Psoas muscle (tissue), 8 donors: ENCODE measurements at regions of chrX and their contacts with region 1.

Region 1: DNA sequence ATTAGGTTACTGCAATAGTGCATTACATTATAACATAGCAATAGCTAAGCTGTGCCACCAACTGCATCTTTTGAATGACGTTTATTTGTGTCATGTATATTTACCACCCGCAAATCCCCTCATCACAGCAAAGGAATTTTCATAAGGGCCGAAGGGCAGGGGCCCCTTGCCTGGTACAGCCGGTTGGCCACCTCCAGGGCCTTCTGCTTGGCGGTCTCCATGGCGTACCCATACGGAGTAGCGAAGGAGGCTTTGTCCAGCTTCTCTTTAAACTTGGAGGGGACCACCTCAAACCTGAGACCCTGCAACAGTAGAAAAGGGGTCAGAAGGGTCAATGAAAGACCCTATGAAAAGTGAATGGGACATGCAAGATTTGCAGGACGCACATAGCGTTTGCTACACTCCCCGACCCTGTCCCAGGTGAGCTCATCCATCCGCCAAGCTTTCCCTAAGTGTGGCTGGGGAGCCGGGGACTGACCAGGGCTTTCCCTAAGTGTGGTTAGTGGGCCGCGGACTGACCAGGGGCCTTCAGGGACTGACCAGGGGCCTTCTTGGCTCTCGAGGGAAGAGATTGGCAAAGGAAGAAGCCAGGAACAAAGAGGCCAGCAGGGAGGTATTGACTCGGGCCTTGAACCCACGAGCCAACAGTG is 10.6 kb downstream of the ASMTL start:
- DNase-seq: no peak
- ATAC-seq: no peak
- H3K4me3 ChIP-seq: no peak overlapping the region
- H3K27ac ChIP-seq: no peak overlapping the region
- H3K4me1 ChIP-seq: no peaks in the 10 kb centered on the region
- H3K27me3 ChIP-seq: no peaks in the 10 kb centered on the region
- CTCF ChIP-seq: no peak

Region 2: DNA sequence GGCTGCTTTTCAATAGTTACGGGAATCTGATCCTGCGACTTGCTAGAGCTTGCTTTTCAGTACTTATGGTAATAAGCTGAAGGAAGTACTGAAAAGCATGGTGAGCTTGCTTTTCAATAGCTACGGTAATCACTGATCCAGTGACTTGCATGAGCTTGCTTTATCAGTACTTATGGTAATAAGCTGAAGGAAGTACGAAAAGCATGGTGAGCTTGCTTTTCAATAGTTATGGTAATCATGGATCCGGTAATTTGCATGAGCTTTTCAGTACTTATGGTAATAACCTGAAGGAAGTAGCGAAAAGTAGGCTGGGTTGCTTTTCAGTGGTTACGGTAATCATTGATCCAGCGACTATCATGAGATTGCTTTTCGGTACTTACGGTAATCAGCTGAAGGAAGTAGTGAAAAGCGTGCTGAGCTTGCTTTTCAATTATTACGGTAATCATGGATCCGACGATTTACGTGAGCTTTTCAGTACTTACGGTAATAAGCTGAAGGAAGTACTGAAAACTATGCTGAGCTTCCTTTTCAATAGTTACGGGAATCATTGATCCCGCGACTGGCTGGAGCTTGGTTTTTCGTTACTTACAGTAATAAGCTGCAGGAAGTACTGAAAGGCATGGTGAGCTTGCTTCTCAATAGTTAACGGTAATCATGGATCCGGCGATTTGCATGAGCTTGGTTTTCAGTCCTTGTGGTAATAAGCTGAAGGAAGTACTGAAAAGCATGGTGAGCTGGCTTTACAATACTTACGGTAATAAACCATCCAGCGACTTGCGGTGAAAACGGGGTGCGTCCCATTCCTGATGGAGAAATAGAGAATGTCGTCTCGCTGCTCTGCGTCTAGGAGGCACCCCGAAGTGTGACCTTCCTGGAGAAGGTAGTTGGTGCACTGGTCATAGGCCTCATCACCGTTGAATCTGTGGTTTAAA is 236.2 kb before region 1 on chrX:
- intact Hi-C with region 1: no loop called
- DNase-seq: no peak
- ATAC-seq: no peak
- H3K4me3 ChIP-seq: peak overlapping the region; percentile 47
- H3K27ac ChIP-seq: no peak overlapping the region
- H3K4me1 ChIP-seq: no peaks in the 10 kb centered on the region
- H3K27me3 ChIP-seq: peaks cover 0 to 8% (median 0%) of the 10 kb centered on the region in 3 donors
- CTCF ChIP-seq: no peak

Region 3: DNA sequence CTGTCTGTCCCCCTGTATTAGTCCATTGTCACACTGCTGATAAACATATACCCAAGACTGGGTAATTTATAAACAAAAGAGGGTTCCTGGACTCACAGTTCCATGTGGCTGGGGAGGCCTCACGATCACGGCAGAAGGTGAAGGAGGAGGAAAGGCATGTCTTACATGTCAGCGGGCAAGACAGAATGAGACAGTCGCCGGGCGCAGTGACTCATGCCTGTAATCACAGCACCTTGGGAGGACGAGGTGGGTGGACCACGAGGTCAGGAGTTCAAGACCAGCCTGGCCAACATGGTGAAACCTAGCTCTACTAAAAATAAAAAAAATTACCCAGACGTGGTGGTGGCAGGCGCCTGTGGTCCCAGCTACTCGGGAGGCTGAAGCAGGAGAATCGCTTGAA is 80.9 kb before region 1 on chrX:
- intact Hi-C with region 1: no loop called
- DNase-seq: peak in 1 of 2 donors; percentile 23
- ATAC-seq: no peak
- H3K4me3 ChIP-seq: no peak overlapping the region
- H3K27ac ChIP-seq: no peak overlapping the region
- H3K4me1 ChIP-seq: no peaks in the 10 kb centered on the region
- H3K27me3 ChIP-seq: no peaks in the 10 kb centered on the region
- CTCF ChIP-seq: no peak

Region 4: GRCh38 chrX:1391707-1392375 is 50.3 kb before region 1 on chrX and contains the start of gene SLC25A6:
- intact Hi-C with region 1: loop called in 1 of 2 experiments (anchors 10 kb)
- DNase-seq: peak; percentile 99 to 100
- ATAC-seq: peak; percentile 90 to 94 (median 92)
- H3K4me3 ChIP-seq: peak within 1 kb of the TSS; percentile 96
- H3K27ac ChIP-seq: peak within 1 kb of the TSS; percentile 99
- H3K4me1 ChIP-seq: peaks cover 46% of the 10 kb centered on the region
- H3K27me3 ChIP-seq: no peaks in the 10 kb centered on the region
- CTCF ChIP-seq: peak; percentile 13
- total RNA-seq, gene SLC25A6: 73.9 to 92.4 (median 81.5) TPM